Calu3 (cell line): ENCODE measurements at regions of chr10 and their contacts with region 1.

Region 1: DNA sequence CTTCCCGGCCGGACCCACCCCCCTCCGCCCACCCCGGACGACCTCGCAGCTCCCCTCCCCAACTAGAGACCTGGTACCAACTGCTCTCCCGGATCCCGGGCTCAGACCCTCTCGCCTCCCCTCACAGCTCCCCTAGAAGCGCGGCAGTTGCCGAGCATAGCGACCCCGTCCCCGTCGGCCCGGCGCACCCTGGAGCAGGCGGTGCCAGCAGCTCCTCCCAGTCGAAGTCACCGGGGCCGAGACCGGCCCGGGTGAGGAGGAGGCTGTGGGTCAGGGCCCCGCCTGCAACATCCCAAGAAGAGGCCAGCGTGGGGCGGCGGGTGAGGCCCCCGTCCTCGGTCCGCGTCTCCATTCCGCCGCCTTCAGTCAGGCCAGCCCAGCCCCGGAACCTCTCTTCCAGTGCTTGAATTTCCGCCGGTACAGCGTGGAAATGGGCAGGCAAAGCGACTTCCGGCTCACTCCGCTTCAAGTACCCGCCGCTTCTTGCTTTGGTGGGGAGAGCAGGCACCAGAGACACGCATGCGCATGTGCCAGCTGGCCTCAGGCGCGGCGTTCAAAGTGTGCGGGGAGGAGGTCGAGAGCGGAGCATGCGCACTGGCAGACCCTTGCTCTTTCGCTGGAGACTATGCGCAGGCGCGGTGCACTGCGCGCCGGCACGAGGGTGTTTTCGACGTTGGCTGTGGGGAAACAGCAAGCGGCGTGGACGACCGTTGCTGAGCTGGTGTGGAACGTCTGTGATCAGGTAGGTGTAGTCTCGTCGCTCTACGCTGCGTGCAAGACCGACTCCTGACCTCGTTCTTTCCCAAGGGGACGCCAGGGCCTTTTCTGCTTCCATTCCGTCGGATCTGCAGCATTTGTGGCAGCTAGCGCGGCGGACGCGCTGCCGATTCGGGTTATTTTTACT is at the start of gene C10orf88:
- DNase-seq: peak; percentile 87
- H3K4me3 Mint-ChIP-seq: peak within 1 kb of the TSS; percentile 88
- H3K27ac Mint-ChIP-seq: peak within 1 kb of the TSS; percentile 73
- H3K4me1 Mint-ChIP-seq: no peaks in the 10 kb centered on the region
- H3K27me3 Mint-ChIP-seq: no peaks in the 10 kb centered on the region
- CTCF ChIP-seq: no peak
- total RNA-seq, gene C10orf88: 7.8 and 8.3 TPM in 2 replicates

Region 2: GRCh38 chr10:122879339-122880273 is 74.5 kb before region 1 on chr10 and contains the start of gene FAM24B:
- CTCF ChIA-PET with region 1: no interaction called
- intact Hi-C with region 1: loop called (anchors 2 kb)
- DNase-seq: peak; percentile 77
- H3K4me3 Mint-ChIP-seq: peak within 1 kb of the TSS; percentile 89
- H3K27ac Mint-ChIP-seq: peak within 1 kb of the TSS; percentile 33
- H3K4me1 Mint-ChIP-seq: peaks cover 6% of the 10 kb centered on the region
- H3K27me3 Mint-ChIP-seq: no peaks in the 10 kb centered on the region
- CTCF ChIP-seq: no peak
- total RNA-seq, gene FAM24B: 5.1 and 6.3 TPM in 2 replicates